G401 (cell line): ENCODE measurements at regions of chr4 and their contacts with region 1.

Region 1: DNA sequence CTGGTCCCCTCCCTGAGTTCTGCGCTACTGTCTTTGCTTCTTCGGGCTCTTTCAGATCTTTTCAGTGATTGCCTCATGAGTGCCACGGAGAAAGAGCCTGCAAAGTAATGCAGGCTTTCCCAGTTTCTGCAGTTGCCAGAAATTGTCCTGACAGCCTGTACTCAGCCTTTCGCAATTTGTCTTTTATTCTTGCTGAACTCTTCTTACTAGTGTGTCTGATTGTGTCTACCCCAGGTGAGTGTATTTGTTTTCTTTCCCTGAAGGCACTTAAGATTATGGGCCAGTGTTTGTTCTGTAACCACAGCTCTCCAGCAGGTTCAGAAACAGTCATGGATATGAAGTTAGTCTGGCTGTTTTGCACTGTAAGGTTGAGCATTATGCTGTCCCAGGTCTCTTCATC is 47.1 kb downstream of the FAM193A start:
- DNase-seq: no peak

Region 2: DNA sequence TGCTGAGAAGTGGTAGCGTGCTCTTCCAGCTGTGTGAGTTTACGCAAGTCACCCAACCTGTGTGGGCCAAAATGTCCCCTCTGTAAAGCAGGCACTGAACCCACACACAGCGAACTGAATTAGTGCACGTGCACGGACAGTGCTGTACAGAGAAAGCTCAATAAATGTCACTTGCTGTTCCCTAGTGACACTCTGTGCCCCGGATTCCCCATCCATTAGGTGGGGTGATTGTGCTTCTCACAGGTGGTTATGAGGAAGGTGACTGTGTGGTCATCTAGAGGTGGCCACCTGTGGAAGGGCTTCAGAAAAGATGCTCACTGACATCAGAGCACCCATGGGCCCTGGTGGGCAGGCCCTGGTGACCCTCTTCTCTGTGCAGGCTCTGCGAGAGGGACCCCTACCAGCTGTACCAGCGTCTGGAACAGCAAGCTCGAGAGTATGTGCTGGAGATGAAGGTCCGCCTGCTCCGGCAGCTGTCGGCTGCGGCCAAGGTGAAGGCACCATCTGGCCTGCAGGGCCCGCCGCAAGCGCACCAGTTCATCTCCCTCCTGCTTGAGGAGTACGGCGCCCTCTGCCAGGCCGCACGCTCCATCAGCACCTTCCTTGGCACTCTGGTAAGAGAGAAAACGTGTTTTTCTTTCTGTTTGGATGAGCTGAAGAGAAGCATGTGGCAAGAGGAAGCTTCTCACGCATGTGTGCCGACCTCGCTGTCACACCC is 47.2 kb after region 1 on chr4:
- in situ Hi-C with region 1: loop called (anchors 5 kb)
- DNase-seq: no peak